GM12878 (cell line): ENCODE measurements at regions of chr1 and their contacts with region 1.

Region 1: DNA sequence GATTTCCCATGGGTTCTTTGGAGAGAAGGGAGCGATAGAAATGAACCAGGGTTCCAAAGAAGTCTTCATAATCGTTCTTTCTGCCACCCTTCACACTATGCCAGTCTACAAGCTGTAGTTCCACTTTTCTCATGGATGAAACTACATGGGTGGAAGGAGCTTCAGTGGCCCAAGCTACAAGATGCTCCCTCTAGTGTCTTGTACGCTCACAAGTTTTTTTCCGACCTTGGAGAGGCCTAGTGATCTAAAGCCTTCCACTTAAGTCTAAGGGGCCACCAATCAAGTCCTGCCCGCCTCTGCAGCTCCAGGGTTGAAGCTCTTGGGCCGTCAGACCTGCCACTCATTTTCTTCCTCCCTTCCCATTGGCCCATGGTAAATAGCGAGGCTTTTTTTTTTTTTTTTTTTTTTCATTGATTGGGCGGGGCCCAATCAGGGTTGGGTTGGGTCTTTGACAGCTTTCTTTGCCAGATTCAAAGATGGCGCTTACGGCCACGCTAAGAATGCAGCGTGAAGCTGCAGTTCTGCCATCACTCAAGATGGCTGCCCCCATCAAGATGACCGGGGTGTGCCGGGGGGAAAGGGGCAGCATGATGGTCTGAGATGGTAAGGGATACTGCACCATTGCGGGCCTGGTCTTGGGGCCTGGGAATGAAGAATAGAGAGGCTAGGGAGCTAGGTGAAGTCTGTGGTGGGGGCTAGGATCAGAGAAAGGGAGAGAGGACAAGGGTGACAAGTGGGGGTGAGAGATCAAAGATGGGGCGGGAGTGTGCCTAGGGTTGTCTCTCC is at the start of gene TOMM40L:
- DNase-seq: peak; percentile 97
- ATAC-seq: peak; percentile 96
- H3K4me3 ChIP-seq: peak within 1 kb of the TSS; percentile 83
- H3K27ac ChIP-seq: peak within 1 kb of the TSS; percentile 70
- H3K4me1 ChIP-seq: peaks cover 19% of the 10 kb centered on the region
- H3K27me3 ChIP-seq: no peaks in the 10 kb centered on the region
- CTCF ChIP-seq: peak; percentile 61 to 66 (median 64)
- EP300 ChIP-seq: no peak
- POLR2A ChIP-seq: peak; percentile 62; the same call in 1 of the 2 replicates
- RAD21 ChIP-seq: peak; percentile 61
- polyA plus RNA-seq, gene TOMM40L: 5.9 to 10.0 TPM

Region 2: DNA sequence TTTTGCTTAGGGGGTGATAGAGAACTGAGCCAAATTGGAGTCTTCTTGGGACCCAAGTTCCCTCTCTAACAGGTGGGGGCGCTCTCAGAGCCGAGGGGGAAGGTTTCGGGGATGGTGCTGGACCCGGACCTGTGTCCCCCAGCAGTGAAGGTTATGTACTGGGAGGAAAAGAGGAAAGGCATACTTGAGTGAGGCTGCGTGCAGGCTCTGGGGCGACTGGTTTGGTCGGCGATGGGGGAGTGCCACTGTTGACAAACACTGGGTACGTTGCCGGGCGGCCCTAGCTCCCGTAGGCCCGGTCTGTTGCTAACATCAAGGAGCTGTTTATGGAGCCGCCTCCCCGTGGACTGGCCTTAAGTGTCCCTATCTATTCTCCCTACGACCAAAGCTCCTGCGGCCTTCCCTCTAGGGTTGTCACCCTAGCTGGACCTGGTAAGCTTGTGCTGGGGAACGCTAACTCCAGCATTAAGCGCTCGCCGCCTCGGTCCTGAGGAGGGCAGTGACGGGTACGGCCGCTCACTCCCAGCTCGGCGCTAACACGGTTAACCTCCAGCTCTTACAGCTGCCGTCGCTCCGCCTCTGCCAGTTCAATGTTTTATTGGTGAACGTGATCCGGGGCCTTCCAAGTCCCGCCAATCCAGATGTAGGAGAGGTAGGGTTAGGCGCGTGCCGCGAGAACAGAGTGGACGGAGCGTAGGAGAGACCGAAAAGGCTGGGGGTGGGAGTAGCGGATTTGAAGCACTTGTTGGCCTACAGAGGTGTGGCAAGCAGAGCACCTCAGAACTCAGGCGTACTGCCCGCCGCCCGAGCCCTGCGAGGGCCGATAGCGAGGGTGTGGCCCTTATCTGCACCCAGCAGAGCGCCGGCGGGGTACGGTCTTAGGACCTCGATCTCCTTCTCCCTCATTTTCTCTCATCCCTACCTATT is 59.7 kb before region 1 on chr1 and contains the start of gene PPOX:
- CTCF ChIA-PET with region 1: interaction called, 34 read pairs
- POLR2A ChIA-PET with region 1: interaction called, 5 read pairs
- RAD21 ChIA-PET with region 1: interaction called, 15 read pairs
- SMC1A ChIA-PET with region 1: interaction called, 7 read pairs
- in situ Hi-C with region 1: no loop called
- intact Hi-C with region 1: no loop called
- DNase-seq: peak; percentile 92
- ATAC-seq: peak; percentile 97
- H3K4me3 ChIP-seq: peak within 1 kb of the TSS; percentile 86
- H3K27ac ChIP-seq: peak within 1 kb of the TSS; percentile 54
- H3K4me1 ChIP-seq: peaks cover 8% of the 10 kb centered on the region
- H3K27me3 ChIP-seq: no peaks in the 10 kb centered on the region
- CTCF ChIP-seq: peak; percentile 50 to 67 (median 61)
- EP300 ChIP-seq: no peak; a peak in 1 of 4 replicates
- POLR2A ChIP-seq: peak; percentile 88
- RAD21 ChIP-seq: peak; percentile 26; the same call in 1 of the 2 replicates
- polyA plus RNA-seq, gene PPOX: 8.9 to 16.3 TPM

Region 3: GRCh38 chr1:161192476-161193465 is 33.0 kb before region 1 on chr1:
- CTCF ChIA-PET with region 1: interaction called, 164 read pairs
- POLR2A ChIA-PET with region 1: interaction called, 18 read pairs
- RAD21 ChIA-PET with region 1: interaction called, 55 read pairs
- SMC1A ChIA-PET with region 1: interaction called, 42 read pairs
- in situ Hi-C with region 1: no loop called
- intact Hi-C with region 1: loop called (anchors 1 kb)
- DNase-seq: no peak
- ATAC-seq: peak; percentile 94
- H3K4me3 ChIP-seq: no peak overlapping the region
- H3K27ac ChIP-seq: no peak overlapping the region
- H3K4me1 ChIP-seq: peaks cover 19% of the 10 kb centered on the region
- H3K27me3 ChIP-seq: no peaks in the 10 kb centered on the region
- CTCF ChIP-seq: peak; percentile 89 to 95 (median 89)
- EP300 ChIP-seq: no peak
- POLR2A ChIP-seq: no peak
- RAD21 ChIP-seq: peak; percentile 84

Region 4: DNA sequence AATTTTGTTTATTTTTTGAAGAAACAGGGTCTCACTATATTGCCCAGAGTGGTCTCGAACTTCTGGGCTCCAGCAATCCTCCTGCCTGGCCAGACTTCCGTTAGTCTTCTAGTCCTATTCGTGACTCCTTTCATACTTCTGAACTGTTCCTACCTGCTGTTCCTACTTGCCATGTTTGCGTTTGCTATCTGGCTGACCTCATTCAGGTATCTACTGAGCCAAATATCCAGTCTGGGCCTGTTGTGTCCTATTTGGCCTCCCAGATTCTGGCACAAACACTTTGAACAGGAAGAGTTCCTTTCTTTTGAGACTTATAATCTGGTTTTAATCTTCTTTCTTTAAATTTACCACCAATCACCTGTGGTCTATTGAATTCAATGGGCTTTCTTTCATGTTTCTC is 19.2 kb after region 1 on chr1:
- CTCF ChIA-PET with region 1: interaction called, 13 read pairs
- POLR2A ChIA-PET with region 1: interaction called, 5 read pairs
- RAD21 ChIA-PET with region 1: interaction called, 4 read pairs
- SMC1A ChIA-PET with region 1: interaction called, 4 read pairs
- in situ Hi-C with region 1: no loop called
- intact Hi-C with region 1: no loop called
- DNase-seq: no peak
- ATAC-seq: no peak
- H3K4me3 ChIP-seq: no peak overlapping the region
- H3K27ac ChIP-seq: no peak overlapping the region
- H3K4me1 ChIP-seq: no peaks in the 10 kb centered on the region
- H3K27me3 ChIP-seq: no peaks in the 10 kb centered on the region
- CTCF ChIP-seq: no peak
- EP300 ChIP-seq: no peak
- POLR2A ChIP-seq: no peak
- RAD21 ChIP-seq: no peak

Region 5: DNA sequence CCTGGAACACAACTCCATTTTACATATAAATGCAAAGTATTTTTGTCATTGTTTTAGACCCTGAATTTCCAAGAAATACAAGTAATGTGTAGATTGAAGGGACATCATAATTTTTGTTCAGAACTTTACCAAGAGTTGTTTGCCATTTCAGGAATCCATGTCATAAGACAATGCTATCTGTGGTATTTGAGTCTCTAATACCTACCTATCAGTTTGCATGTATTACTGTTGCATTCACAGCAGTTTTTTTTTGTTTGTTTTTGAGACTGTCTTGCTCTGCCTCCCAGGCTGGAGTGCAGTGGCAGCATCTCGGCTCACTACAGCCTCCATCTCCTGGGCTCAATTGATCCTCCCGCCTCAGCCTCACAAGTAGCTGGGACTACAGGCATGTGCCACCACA is 66.9 kb after region 1 on chr1:
- CTCF ChIA-PET with region 1: interaction called, 98 read pairs
- POLR2A ChIA-PET with region 1: interaction called, 4 read pairs
- RAD21 ChIA-PET with region 1: interaction called, 32 read pairs
- SMC1A ChIA-PET with region 1: interaction called, 62 read pairs
- in situ Hi-C with region 1: loop called (anchors 5 kb)
- intact Hi-C with region 1: loop called (anchors 2 kb)
- DNase-seq: no peak
- ATAC-seq: no peak
- H3K4me3 ChIP-seq: no peak overlapping the region
- H3K27ac ChIP-seq: no peak overlapping the region
- H3K4me1 ChIP-seq: peaks cover 2% of the 10 kb centered on the region; the same call in 1 of the 2 replicates
- H3K27me3 ChIP-seq: no peaks in the 10 kb centered on the region
- CTCF ChIP-seq: no peak
- EP300 ChIP-seq: no peak
- POLR2A ChIP-seq: no peak
- RAD21 ChIP-seq: no peak

Region 6: DNA sequence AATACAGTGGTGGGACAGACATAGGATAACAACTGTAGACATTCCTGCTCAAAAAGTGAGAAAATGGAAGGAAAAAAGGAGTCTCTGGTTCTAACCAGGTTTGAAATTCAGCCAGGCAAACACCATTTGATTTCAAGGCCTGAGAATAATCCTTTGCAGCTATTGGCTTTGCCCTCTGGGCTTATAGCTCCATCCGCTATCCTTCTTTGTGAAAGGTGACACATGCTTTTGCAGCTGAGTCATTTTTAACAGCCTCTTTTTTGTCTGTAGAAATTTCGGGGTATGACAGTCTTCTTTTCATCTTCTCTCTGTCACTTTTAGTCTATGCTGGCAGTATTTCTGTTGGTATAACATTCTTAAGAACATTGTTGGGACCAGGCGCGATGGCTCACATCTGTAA is 104.6 kb after region 1 on chr1:
- CTCF ChIA-PET with region 1: no interaction called
- POLR2A ChIA-PET with region 1: no interaction called
- RAD21 ChIA-PET with region 1: no interaction called
- SMC1A ChIA-PET with region 1: no interaction called
- in situ Hi-C with region 1: no loop called
- intact Hi-C with region 1: no loop called
- DNase-seq: no peak
- ATAC-seq: no peak
- H3K4me3 ChIP-seq: no peak overlapping the region
- H3K27ac ChIP-seq: no peak overlapping the region
- H3K4me1 ChIP-seq: no peaks in the 10 kb centered on the region
- H3K27me3 ChIP-seq: no peaks in the 10 kb centered on the region
- CTCF ChIP-seq: no peak
- EP300 ChIP-seq: no peak
- POLR2A ChIP-seq: no peak
- RAD21 ChIP-seq: no peak

Region 7: GRCh38 chr1:161367684-161368400 is 142.1 kb after region 1 on chr1 and contains the start of gene CFAP126:
- CTCF ChIA-PET with region 1: interaction called, 59 read pairs
- POLR2A ChIA-PET with region 1: interaction called, 6 read pairs
- RAD21 ChIA-PET with region 1: interaction called, 14 read pairs
- SMC1A ChIA-PET with region 1: interaction called, 18 read pairs
- in situ Hi-C with region 1: no loop called
- intact Hi-C with region 1: no loop called
- DNase-seq: peak; percentile 35
- ATAC-seq: peak; percentile 100
- H3K4me3 ChIP-seq: no peak within 1 kb of the TSS
- H3K27ac ChIP-seq: no peak within 1 kb of the TSS; the same call in 1 of the 2 replicates
- H3K4me1 ChIP-seq: no peaks in the 10 kb centered on the region; the same call in 1 of the 2 replicates
- H3K27me3 ChIP-seq: no peaks in the 10 kb centered on the region
- CTCF ChIP-seq: peak in 2 of 3 experiments; percentile 19 to 49; a peak in 2 of 6 replicates
- EP300 ChIP-seq: no peak
- POLR2A ChIP-seq: no peak
- RAD21 ChIP-seq: peak; percentile 48
- polyA plus RNA-seq, gene CFAP126: not detected

Region 8: DNA sequence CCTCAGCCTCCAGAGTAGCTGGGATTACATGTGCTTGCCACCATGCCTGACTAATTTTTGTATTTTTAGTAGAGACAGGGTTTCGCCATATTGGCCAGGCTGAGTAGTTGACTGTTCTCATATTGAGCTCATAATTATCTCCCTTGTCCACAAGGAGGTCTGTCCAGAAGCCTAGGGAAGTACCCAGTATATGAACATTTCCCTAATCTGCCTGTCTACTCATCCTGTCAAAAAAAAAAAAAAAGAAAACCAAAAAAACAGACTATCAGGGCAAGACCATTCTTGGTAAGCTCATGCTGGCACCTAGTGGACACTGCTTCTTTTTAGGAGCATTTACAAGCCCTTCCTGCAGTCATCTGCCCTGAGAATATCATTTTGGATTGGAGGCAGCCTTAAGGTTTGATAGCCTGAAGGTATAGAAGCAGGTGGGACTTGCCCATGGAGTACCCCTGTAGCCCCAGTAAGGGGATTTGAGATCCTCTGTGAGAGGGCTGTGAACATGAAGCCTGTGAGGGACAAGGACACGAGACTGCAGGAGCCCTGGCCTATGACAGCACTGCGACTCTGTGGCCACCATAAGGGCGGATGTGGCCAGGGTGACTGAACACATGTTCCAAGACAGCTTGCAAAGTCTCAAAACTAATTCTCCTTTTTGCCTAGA is 513.0 kb after region 1 on chr1:
- CTCF ChIA-PET with region 1: interaction called, 3 read pairs
- POLR2A ChIA-PET with region 1: no interaction called
- RAD21 ChIA-PET with region 1: interaction called, 21 read pairs
- SMC1A ChIA-PET with region 1: interaction called, 5 read pairs
- in situ Hi-C with region 1: no loop called
- intact Hi-C with region 1: no loop called
- DNase-seq: peak; percentile 93
- ATAC-seq: peak; percentile 89
- H3K4me3 ChIP-seq: no peak overlapping the region
- H3K27ac ChIP-seq: peak overlapping the region; percentile 83
- H3K4me1 ChIP-seq: peaks cover 62% of the 10 kb centered on the region
- H3K27me3 ChIP-seq: no peaks in the 10 kb centered on the region
- CTCF ChIP-seq: peak; percentile 57 to 83 (median 78)
- EP300 ChIP-seq: 0 out of 4 replicates have a peak, but pooled peaks of 1 of the 2 experiments have one; percentile 5
- POLR2A ChIP-seq: peak; percentile 56
- RAD21 ChIP-seq: peak; percentile 95